Posterior vena cava (tissue), 2 donors: ENCODE measurements at regions of chr12 and their contacts with region 1.

Region 1: DNA sequence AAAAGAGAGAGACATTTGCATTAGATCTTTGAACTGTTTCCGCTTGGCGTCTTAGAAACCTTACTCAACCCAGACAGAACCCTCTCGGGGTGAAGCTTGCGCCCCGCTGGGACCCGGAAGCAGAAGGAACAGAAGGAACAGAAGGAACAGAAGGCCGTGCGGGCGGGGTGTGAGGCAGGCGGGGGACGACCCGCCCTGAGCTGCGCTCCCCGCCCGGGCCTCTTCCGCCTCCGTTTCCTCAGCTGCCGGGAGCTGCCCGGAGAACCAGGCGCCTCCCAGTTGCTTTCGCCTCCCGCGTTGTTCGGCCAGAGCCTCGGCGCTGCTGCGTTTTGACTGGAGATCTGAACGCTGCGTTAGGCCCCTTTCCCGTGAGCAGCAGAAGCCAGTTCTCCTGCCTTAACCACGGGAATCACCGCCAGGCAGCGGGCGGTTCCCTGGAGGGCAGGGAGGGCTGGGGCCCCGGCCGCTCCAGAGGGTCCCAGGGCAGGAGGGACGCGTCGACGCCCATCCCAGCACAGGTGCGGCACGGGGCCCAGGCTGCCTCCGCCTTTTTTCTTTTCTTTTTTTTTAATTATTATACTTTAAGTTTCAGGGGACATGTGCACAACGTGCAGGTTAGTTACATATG is 19.3 kb upstream of the MMP17 start:
- DNase-seq: no peak

Region 2: DNA sequence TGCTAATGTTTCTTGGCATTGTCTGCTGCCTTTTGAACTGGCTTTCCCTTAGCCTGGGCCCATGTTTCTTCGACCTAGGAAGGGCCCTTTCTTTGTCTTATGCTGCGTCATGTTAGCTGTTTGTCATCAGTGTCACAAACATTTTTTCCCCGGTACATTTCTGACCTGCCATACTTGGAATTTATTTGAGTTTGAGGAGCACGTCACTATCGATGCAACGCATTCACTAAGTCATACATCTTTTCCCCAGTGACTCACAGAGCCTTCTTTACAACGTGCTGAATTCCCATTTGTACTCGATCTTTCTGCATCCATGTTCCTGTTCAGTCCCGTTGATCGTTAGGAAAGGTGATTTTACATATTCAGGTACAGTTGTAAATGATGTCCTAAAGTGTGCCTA is 36.9 kb before region 1 on chr12:
- intact Hi-C with region 1: loop called in 1 of 2 experiments (anchors 1 kb)
- DNase-seq: no peak